HCT116 (cell line): ENCODE measurements at regions of chr17 and their contacts with region 1.

Region 1: DNA sequence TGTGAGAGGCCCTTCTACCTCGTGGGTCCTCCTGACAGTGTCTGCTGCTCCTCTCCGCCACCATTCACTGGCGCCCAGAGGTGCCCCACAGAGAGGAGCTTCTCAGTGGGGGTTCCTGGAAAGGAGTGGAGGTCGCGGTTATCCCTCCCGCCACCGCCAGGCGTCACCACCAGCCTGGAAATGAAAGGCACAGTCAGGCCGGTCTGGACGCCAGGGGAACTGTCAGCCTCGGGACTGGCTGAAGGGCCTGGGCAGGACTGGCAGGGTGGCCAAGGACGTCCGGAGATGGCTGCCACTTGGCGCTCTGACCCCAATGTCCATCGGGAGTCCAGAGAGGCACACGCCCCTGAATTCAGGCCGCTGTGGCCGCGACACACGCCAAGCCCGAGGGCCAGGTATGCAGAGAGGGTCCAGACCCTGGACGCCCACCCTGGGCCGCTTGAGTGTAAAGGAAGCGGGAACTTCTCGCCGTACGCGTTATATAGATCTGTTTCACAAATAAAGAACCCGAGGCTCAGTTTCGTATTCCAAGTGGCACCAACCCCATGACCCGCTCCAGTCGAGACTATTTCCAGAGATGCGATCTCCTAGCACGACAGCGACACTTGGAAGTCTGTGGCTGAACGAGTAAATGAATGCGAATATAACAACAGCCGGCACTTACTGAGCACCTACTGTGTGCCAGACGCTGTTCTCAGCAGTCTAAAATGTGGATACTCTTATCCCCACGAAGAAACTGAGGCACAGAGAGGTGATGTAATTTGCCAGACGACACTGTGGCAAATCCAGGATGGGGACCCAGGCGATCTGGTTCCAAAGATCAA is 7.6 kb upstream of the NXPH3 start:
- DNase-seq: peak; percentile 81
- ATAC-seq: peak; percentile 74
- H3K4me3 ChIP-seq: 0 out of 4 replicates have a peak overlapping the region, but pooled peaks of 1 of the 2 experiments have one; percentile 2
- H3K27ac ChIP-seq: no peak overlapping the region
- H3K4me1 ChIP-seq: peaks cover 0 to 17% of the 10 kb centered on the region in 2 experiments; a peak in 3 of 4 replicates
- H3K27me3 ChIP-seq: peaks cover 5% of the 10 kb centered on the region; the same call in 1 of the 2 replicates
- CTCF ChIP-seq: peak; percentile 98 to 99 (median 99)
- POLR2A ChIP-seq: no peak
- RAD21 ChIP-seq: peak; percentile 100

Region 2: GRCh38 chr17:49646391-49647255 is 78.5 kb after region 1 on chr17:
- CTCF ChIA-PET with region 1: interaction called, 16 read pairs
- POLR2A ChIA-PET with region 1: no interaction called
- RAD21 ChIA-PET with region 1: no interaction called
- intact Hi-C with region 1: no loop called
- DNase-seq: peak; percentile 68
- ATAC-seq: peak; percentile 92
- H3K4me3 ChIP-seq: peak overlapping the region; percentile 29 to 49
- H3K27ac ChIP-seq: peak overlapping the region; percentile 93
- H3K4me1 ChIP-seq: peaks cover 42 to 48% of the 10 kb centered on the region in 2 experiments
- H3K27me3 ChIP-seq: no peaks in the 10 kb centered on the region
- CTCF ChIP-seq: no peak
- POLR2A ChIP-seq: no peak
- RAD21 ChIP-seq: no peak

Region 3: GRCh38 chr17:49694847-49695683 is 127.0 kb after region 1 on chr17:
- CTCF ChIA-PET with region 1: interaction called, 92 read pairs
- POLR2A ChIA-PET with region 1: interaction called, 4 read pairs
- RAD21 ChIA-PET with region 1: interaction called, 7 to 10 read pairs
- intact Hi-C with region 1: loop called (anchors 1 kb)
- DNase-seq: no peak
- ATAC-seq: peak; percentile 73
- H3K4me3 ChIP-seq: no peak overlapping the region
- H3K27ac ChIP-seq: no peak overlapping the region
- H3K4me1 ChIP-seq: no peaks in the 10 kb centered on the region
- H3K27me3 ChIP-seq: no peaks in the 10 kb centered on the region
- CTCF ChIP-seq: peak; percentile 97 to 100 (median 99)
- POLR2A ChIP-seq: no peak
- RAD21 ChIP-seq: peak; percentile 99

Region 4: GRCh38 chr17:49707608-49708514 is 139.8 kb after region 1 on chr17 and contains the start of gene SLC35B1:
- CTCF ChIA-PET with region 1: interaction called, 36 read pairs
- POLR2A ChIA-PET with region 1: interaction called, 5 read pairs
- RAD21 ChIA-PET with region 1: interaction called in 1 of 2 experiments, 5 read pairs
- intact Hi-C with region 1: loop called (anchors 2 kb)
- DNase-seq: peak; percentile 100
- ATAC-seq: peak; percentile 93
- H3K4me3 ChIP-seq: peak within 1 kb of the TSS; percentile 85 to 92
- H3K27ac ChIP-seq: peak within 1 kb of the TSS; percentile 77
- H3K4me1 ChIP-seq: peaks cover 16 to 21% of the 10 kb centered on the region in 2 experiments
- H3K27me3 ChIP-seq: no peaks in the 10 kb centered on the region
- CTCF ChIP-seq: peak; percentile 96 to 99 (median 98)
- POLR2A ChIP-seq: no peak
- RAD21 ChIP-seq: peak; percentile 74
- total RNA-seq, gene SLC35B1: 87.5 TPM

Region 5: DNA sequence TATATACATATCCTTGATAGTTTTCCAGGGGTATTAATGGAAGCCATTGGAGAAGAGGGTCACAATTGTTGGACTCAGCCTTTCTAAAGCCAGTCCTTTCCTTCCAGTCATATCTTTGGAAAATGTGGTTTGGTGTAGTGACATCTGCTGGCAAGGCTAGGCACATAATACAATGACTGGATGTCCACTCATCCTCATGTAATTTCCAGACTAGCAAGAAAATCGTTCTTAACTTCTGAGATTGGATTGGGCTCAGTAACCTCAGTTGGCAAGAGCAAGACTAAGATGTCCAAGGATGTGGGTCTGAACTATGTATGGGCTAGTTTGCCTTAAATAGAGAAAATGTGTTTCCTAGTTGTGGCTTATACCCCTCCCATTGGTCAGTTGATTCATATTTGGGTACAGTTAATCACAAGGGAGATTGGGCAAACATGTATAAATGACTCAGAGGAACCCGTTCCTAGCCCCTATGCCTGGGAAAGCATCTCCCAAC is 211.7 kb after region 1 on chr17:
- CTCF ChIA-PET with region 1: no interaction called
- POLR2A ChIA-PET with region 1: no interaction called
- RAD21 ChIA-PET with region 1: no interaction called
- intact Hi-C with region 1: loop called (anchors 2 kb)
- DNase-seq: peak; percentile 34
- ATAC-seq: peak; percentile 91
- H3K4me3 ChIP-seq: no peak overlapping the region
- H3K27ac ChIP-seq: no peak overlapping the region
- H3K4me1 ChIP-seq: no peaks in the 10 kb centered on the region
- H3K27me3 ChIP-seq: no peaks in the 10 kb centered on the region; the same call in 1 of the 2 replicates
- CTCF ChIP-seq: peak; percentile 73 to 86 (median 73)
- POLR2A ChIP-seq: no peak
- RAD21 ChIP-seq: no peak; the same call in 1 of the 2 replicates

Region 6: DNA sequence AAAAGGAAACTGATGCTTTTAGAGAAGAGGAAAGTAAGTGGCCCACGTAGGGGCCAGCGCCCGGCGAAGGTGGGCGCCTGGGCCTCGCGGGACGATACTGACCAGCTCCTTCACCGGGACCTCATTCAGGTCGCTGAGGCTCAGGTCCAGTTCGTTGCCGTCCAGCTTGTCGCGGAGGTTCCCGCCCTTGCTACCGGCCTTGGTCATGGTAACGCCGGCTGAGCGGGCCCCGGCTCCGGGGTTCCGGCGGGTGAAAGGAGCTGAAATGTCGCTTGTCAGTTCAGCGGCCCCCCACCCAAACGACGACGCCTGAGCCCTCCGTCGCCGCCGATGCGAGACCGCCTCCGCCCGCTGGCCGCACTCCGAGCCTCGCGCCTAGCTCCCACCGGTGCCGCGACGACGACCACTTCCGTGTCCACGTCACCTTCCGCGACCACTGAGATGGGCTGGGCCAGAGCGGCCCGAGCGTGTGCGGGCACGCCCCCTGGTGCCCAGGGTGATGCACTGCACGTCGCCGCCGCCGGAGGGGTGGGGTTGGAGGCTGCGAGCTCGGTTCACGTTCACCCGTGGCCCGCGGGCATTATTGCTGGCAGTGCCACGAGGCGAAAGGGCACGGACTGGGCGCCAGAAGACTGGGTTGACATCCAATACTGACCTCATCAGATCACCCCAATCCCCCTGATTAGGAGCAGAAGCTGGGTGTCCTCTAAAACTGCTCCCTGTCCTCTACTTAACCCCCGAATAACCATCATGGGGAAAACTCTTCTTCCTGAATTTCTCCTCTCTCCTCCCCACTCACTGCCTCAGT is 829.2 kb after region 1 on chr17 and contains the start of gene LRRC59:
- CTCF ChIA-PET with region 1: no interaction called
- POLR2A ChIA-PET with region 1: no interaction called
- RAD21 ChIA-PET with region 1: no interaction called
- intact Hi-C with region 1: no loop called
- DNase-seq: peak; percentile 77
- ATAC-seq: peak; percentile 95
- H3K4me3 ChIP-seq: peak within 1 kb of the TSS; percentile 95
- H3K27ac ChIP-seq: peak within 1 kb of the TSS; percentile 77
- H3K4me1 ChIP-seq: peaks cover 7 to 27% of the 10 kb centered on the region in 2 experiments
- H3K27me3 ChIP-seq: no peaks in the 10 kb centered on the region
- CTCF ChIP-seq: peak; percentile 83 to 99 (median 94)
- POLR2A ChIP-seq: peak; percentile 71
- RAD21 ChIP-seq: peak; percentile 39; the same call in 1 of the 2 replicates
- total RNA-seq, gene LRRC59: 221 TPM